ENCODE measurements at regions of chr11 and their contacts with region 1.

Region 1: DNA sequence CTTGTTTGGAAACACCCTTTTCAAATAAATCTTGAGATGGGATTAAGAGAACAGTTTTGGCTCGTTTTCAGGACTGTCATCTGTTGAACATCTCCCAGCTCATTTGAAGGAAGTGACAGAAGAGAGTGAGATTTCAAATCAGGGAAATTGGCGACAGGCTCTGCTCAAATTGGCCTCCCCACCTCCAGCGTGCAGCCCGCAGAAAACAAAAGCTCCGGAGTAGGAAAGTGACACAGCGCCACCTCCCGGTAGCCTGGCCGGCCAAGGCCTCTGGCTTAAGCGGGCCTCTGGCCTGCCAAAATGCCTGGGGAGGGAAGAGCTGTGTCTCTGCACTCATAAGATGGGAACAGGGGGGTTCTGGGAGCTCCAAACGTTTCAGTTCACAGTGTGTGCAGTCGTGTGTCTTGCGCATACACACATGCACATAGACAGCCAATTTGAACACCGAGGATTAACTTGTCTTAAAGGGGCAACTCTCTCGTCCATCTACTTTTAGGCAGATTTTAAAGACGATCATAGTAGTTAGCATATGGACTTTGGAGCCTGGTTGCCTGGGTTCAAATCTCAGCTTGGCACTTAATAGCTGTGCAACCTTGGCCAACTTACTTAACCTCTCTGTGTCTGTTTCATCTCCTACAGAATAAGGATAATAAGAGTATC is 132.7 kb upstream of the RCN1 start:
- DNase-seq: peak; percentile 90
- ATAC-seq: peak; percentile 90
- H3K4me3 Mint-ChIP-seq: no peak overlapping the region
- H3K27ac Mint-ChIP-seq: no peak overlapping the region
- H3K4me1 Mint-ChIP-seq: peaks cover 6% of the 10 kb centered on the region
- H3K27me3 Mint-ChIP-seq: peaks cover 12% of the 10 kb centered on the region
- CTCF ChIP-seq: peak; percentile 90

Region 2: GRCh38 chr11:31107062-31107461 is 851.1 kb before region 1 on chr11:
- CTCF ChIA-PET with region 1: interaction called, 14 read pairs
- POLR2A ChIA-PET with region 1: no interaction called
- DNase-seq: peak; percentile 77
- ATAC-seq: peak; percentile 92
- H3K4me3 Mint-ChIP-seq: no peak overlapping the region
- H3K27ac Mint-ChIP-seq: no peak overlapping the region
- H3K4me1 Mint-ChIP-seq: peaks cover 15% of the 10 kb centered on the region
- H3K27me3 Mint-ChIP-seq: no peaks in the 10 kb centered on the region
- CTCF ChIP-seq: peak; percentile 76

Region 3: DNA sequence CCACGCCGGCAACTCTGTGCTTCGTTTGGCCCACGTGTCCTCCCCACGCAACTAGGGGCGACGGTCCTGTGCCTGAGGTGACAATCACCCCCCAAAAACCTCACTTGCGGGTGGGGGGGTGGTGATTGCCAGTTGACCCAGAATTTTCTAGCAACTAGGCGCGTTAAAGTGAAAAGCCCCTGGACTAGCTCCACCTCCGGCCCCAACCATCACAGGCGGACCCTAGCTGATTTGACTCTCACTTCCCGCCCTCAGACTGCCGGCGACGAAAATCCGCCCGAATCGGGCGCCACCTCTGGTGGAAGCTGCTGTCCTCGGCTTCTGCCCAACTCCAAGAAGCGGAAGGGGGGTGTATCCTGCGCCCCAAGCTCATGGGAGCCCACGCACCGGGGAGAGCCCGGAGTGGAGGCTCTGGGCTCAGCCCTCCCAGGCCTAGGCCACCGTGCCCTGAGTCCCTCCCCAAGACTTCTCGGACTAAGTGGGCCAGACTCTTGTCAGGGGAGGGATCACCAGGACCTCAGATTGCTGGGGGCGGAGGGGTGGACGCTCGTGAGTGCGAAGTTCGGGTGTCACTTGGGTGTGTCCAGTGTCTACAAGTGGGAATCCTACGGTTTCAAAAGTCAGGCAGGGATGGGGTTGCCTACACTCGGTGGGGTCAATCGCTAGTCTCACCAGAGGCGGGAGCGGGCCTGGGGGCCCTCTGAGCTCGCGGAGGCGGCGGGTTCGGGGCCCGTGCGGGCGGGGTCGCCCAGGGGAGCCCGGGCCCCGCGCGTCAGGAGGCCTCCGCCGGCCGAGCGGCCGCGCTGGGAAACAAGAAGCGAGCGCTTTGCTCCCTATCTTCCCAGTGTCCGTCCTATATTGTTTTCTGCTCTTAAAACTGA is 159.4 kb before region 1 on chr11:
- CTCF ChIA-PET with region 1: interaction called, 15 read pairs
- POLR2A ChIA-PET with region 1: no interaction called
- DNase-seq: peak; percentile 86
- ATAC-seq: peak; percentile 79
- H3K4me3 Mint-ChIP-seq: peak overlapping the region; percentile 60
- H3K27ac Mint-ChIP-seq: no peak overlapping the region
- H3K4me1 Mint-ChIP-seq: peaks cover 50% of the 10 kb centered on the region
- H3K27me3 Mint-ChIP-seq: peaks cover 100% of the 10 kb centered on the region
- CTCF ChIP-seq: no peak

Region 4: GRCh38 chr11:31847761-31848160 is 110.4 kb before region 1 on chr11:
- CTCF ChIA-PET with region 1: interaction called, 17 read pairs
- POLR2A ChIA-PET with region 1: no interaction called
- DNase-seq: no peak
- ATAC-seq: no peak
- H3K4me3 Mint-ChIP-seq: no peak overlapping the region
- H3K27ac Mint-ChIP-seq: no peak overlapping the region
- H3K4me1 Mint-ChIP-seq: peaks cover 22% of the 10 kb centered on the region
- H3K27me3 Mint-ChIP-seq: peaks cover 3% of the 10 kb centered on the region; the same call in 1 of the 2 replicates
- CTCF ChIP-seq: no peak

Region 5: GRCh38 chr11:31921081-31921480 is 37.1 kb before region 1 on chr11:
- CTCF ChIA-PET with region 1: interaction called, 14 read pairs
- POLR2A ChIA-PET with region 1: no interaction called
- DNase-seq: no peak
- ATAC-seq: no peak
- H3K4me3 Mint-ChIP-seq: no peak overlapping the region
- H3K27ac Mint-ChIP-seq: no peak overlapping the region
- H3K4me1 Mint-ChIP-seq: no peaks in the 10 kb centered on the region
- H3K27me3 Mint-ChIP-seq: no peaks in the 10 kb centered on the region
- CTCF ChIP-seq: no peak

Region 6: DNA sequence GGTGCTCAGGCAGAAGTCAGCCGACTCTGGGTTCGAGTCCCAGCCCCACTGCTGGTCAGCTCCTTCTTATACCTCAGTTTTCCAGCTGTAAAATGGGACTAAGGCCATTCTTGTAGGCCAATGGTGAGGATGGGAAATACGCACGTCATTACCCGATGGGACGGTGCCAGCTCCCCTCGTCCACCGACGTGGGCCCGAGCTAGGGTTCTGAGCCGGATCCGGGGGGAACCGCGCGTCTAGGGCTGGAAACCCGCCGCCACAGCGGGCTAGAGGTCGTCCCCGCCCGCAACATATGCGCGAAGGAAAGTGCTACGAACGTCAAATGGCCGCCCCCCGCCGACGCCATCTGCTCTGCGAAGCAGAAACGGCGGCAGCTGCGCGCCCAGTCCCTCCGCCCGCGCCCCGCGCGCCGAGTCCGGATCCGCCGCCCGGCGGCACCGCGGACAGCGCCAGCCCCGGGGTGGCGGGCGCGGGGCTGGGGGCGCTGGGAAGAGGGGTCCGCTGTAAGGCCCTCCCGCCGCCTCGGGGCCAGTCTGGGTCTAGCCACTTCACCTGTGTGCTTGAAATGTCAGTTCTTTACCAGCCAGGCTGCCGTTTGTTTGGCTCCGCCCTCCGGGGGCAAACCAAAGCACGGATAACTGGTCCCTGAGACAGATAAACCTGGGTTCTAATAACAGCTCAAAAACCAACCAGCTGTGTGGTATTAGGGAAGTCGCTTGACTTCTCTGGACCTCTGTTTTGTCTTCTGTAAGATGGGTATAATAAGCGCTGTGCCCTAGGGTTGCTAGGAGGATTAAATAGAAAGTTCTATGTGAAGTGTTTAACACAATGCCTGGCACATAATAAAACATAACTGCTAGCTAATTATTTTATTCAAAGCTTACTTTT is 29.2 kb after region 1 on chr11:
- CTCF ChIA-PET with region 1: interaction called, 15 read pairs
- POLR2A ChIA-PET with region 1: no interaction called
- DNase-seq: peak; percentile 68
- ATAC-seq: peak; percentile 94
- H3K4me3 Mint-ChIP-seq: peak overlapping the region; percentile 63
- H3K27ac Mint-ChIP-seq: no peak overlapping the region
- H3K4me1 Mint-ChIP-seq: peaks cover 3% of the 10 kb centered on the region; the same call in 1 of the 2 replicates
- H3K27me3 Mint-ChIP-seq: peaks cover 35% of the 10 kb centered on the region
- CTCF ChIP-seq: no peak

Region 7: GRCh38 chr11:32015427-32015826 is 57.2 kb after region 1 on chr11:
- CTCF ChIA-PET with region 1: no interaction called
- POLR2A ChIA-PET with region 1: no interaction called
- DNase-seq: no peak
- ATAC-seq: no peak
- H3K4me3 Mint-ChIP-seq: no peak overlapping the region
- H3K27ac Mint-ChIP-seq: no peak overlapping the region
- H3K4me1 Mint-ChIP-seq: no peaks in the 10 kb centered on the region
- H3K27me3 Mint-ChIP-seq: no peaks in the 10 kb centered on the region; the same call in 1 of the 2 replicates
- CTCF ChIP-seq: no peak

Region 8: GRCh38 chr11:32105871-32106560 is 147.8 kb after region 1 on chr11:
- CTCF ChIA-PET with region 1: no interaction called
- POLR2A ChIA-PET with region 1: no interaction called
- DNase-seq: no peak
- ATAC-seq: no peak
- H3K4me3 Mint-ChIP-seq: no peak overlapping the region
- H3K27ac Mint-ChIP-seq: no peak overlapping the region
- H3K4me1 Mint-ChIP-seq: peaks cover 3% of the 10 kb centered on the region; the same call in 1 of the 2 replicates
- H3K27me3 Mint-ChIP-seq: no peaks in the 10 kb centered on the region
- CTCF ChIP-seq: no peak

Measured in WTC11 (cell line).